Activated CD8-positive, alpha-beta T cell treated with anti-CD3 and anti-CD28 coated beads for 36 hours (primary cell): ENCODE measurements at regions of chr1 and their contacts with region 1.

Region 1: GRCh38 chr1:39901698-39902459 is at the start of gene MYCL:
- DNase-seq: peak; percentile 85
- ATAC-seq: peak; percentile 89
- H3K4me3 Mint-ChIP-seq: peak within 1 kb of the TSS; percentile 70
- H3K27ac Mint-ChIP-seq: no peak within 1 kb of the TSS
- H3K4me1 Mint-ChIP-seq: no peaks in the 10 kb centered on the region
- H3K27me3 Mint-ChIP-seq: peaks cover 55% of the 10 kb centered on the region
- CTCF ChIP-seq: peak; percentile 75
- total RNA-seq, gene MYCL: 0.13 to 0.20 TPM

Region 2: GRCh38 chr1:39754906-39755504 is 146.9 kb before region 1 on chr1:
- CTCF ChIA-PET with region 1: no interaction called
- POLR2A ChIA-PET with region 1: no interaction called
- intact Hi-C with region 1: no loop called
- DNase-seq: no peak
- ATAC-seq: no peak
- H3K4me3 Mint-ChIP-seq: no peak overlapping the region
- H3K27ac Mint-ChIP-seq: no peak overlapping the region
- H3K4me1 Mint-ChIP-seq: no peaks in the 10 kb centered on the region
- H3K27me3 Mint-ChIP-seq: no peaks in the 10 kb centered on the region
- CTCF ChIP-seq: no peak

Region 3: DNA sequence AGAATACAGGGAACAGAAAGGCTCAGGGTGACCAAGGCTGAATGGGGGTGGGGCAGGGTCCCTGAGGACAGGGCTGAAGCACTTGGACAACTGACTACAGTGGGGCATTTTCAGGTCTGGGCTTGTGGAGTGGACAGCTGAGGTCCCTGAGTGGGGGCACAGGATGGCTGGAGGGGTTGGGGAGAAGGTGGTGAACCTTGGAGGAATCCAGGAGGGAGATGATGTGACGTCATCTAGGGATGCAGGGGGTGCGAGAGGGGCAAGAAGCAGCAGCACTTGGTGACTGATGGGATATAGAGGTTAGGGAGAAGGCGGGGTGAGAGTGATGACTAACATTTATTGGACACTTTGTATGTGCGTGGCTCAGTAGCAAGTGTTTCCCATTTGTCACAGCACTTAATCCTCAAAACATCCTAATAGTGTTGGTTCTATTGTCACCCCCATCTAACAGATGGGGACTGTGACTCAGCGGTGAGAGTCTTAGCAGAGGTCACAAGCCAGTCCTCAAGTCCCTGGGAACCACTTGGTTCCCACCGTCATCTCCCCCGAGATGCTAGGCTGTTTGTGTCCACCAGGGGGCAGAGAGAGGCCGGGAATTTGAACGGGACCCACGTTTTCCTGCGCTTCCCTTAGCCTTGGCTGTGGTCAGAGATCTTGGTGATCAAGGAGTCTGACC is 85.3 kb before region 1 on chr1:
- CTCF ChIA-PET with region 1: interaction called, 35 read pairs
- POLR2A ChIA-PET with region 1: interaction called, 6 read pairs
- intact Hi-C with region 1: loop called (anchors 5 kb)
- DNase-seq: peak; percentile 69
- ATAC-seq: peak; percentile 82
- H3K4me3 Mint-ChIP-seq: peak overlapping the region; percentile 39
- H3K27ac Mint-ChIP-seq: no peak overlapping the region
- H3K4me1 Mint-ChIP-seq: peaks cover 14% of the 10 kb centered on the region
- H3K27me3 Mint-ChIP-seq: peaks cover 16% of the 10 kb centered on the region
- CTCF ChIP-seq: peak; percentile 77

Region 4: GRCh38 chr1:39822091-39822490 is 79.8 kb before region 1 on chr1:
- CTCF ChIA-PET with region 1: interaction called, 35 read pairs
- POLR2A ChIA-PET with region 1: no interaction called
- intact Hi-C with region 1: loop called (anchors 5 kb)
- DNase-seq: no peak
- ATAC-seq: no peak
- H3K4me3 Mint-ChIP-seq: no peak overlapping the region
- H3K27ac Mint-ChIP-seq: no peak overlapping the region
- H3K4me1 Mint-ChIP-seq: peaks cover 5% of the 10 kb centered on the region
- H3K27me3 Mint-ChIP-seq: peaks cover 13% of the 10 kb centered on the region
- CTCF ChIP-seq: no peak

Region 5: GRCh38 chr1:39845275-39846116 is 56.4 kb before region 1 on chr1:
- CTCF ChIA-PET with region 1: interaction called, 19 read pairs
- POLR2A ChIA-PET with region 1: no interaction called
- intact Hi-C with region 1: no loop called
- DNase-seq: peak; percentile 90
- ATAC-seq: peak; percentile 95
- H3K4me3 Mint-ChIP-seq: no peak overlapping the region
- H3K27ac Mint-ChIP-seq: peak overlapping the region; percentile 87
- H3K4me1 Mint-ChIP-seq: peaks cover 55% of the 10 kb centered on the region
- H3K27me3 Mint-ChIP-seq: no peaks in the 10 kb centered on the region
- CTCF ChIP-seq: no peak

Region 6: DNA sequence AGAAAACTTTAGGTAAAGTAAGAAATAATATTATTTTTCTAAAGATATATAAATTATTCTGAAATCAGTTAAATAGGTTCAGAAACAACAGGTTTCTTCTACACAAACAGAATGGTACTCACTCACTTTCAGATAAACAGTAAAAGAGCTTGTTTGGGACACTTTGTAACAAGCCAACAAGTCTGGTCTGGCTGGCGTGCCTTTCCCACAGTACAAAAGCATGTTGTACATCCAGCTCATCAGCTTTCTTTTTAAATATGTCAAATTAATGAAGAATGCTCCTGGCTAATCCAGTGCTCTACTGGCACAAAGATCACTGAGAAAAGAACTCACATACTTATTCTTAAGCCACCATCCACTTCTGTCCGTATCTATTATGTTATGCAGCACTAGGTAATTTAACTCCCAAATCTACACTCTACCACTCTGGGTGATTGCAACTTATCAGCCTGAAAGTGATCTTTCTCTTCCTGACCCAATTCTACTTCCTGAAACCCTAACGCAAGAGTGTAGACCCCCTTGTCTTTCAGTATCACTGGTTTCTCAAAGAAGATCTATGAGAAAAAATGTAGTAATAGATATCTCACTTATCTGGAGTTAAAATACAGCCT is 51.2 kb before region 1 on chr1:
- CTCF ChIA-PET with region 1: interaction called, 19 read pairs
- POLR2A ChIA-PET with region 1: no interaction called
- intact Hi-C with region 1: no loop called
- DNase-seq: no peak
- ATAC-seq: no peak
- H3K4me3 Mint-ChIP-seq: no peak overlapping the region
- H3K27ac Mint-ChIP-seq: peak overlapping the region; percentile 11
- H3K4me1 Mint-ChIP-seq: peaks cover 20% of the 10 kb centered on the region
- H3K27me3 Mint-ChIP-seq: no peaks in the 10 kb centered on the region
- CTCF ChIP-seq: no peak

Region 7: GRCh38 chr1:39882152-39882551 is 19.7 kb before region 1 on chr1:
- CTCF ChIA-PET with region 1: interaction called, 27 read pairs
- POLR2A ChIA-PET with region 1: interaction called, 4 read pairs
- intact Hi-C with region 1: no loop called
- DNase-seq: no peak
- ATAC-seq: no peak
- H3K4me3 Mint-ChIP-seq: peak overlapping the region; percentile 91
- H3K27ac Mint-ChIP-seq: peak overlapping the region; percentile 85
- H3K4me1 Mint-ChIP-seq: peaks cover 38% of the 10 kb centered on the region
- H3K27me3 Mint-ChIP-seq: peaks cover 2% of the 10 kb centered on the region
- CTCF ChIP-seq: no peak